ENCODE measurements at regions of chr11 and their contacts with region 1.

Region 1: GRCh38 chr11:28114731-28115130 is 6.5 kb downstream of the METTL15 start:
- DNase-seq: no peak
- ATAC-seq: no peak
- H3K4me3 ChIP-seq: no peak overlapping the region
- H3K4me3 Mint-ChIP-seq: no peak overlapping the region
- H3K27ac ChIP-seq: no peak overlapping the region
- H3K27ac Mint-ChIP-seq: no peak overlapping the region
- H3K4me1 ChIP-seq: peaks cover 10 to 13% of the 10 kb centered on the region in 2 donors
- H3K4me1 Mint-ChIP-seq: peaks cover 32% of the 10 kb centered on the region
- H3K27me3 ChIP-seq: no peaks in the 10 kb centered on the region
- H3K27me3 Mint-ChIP-seq: no peaks in the 10 kb centered on the region
- CTCF ChIP-seq: no peak

Region 2: GRCh38 chr11:28083118-28083517 is 31.6 kb before region 1 on chr11:
- CTCF ChIA-PET with region 1: no interaction called
- POLR2A ChIA-PET with region 1: no interaction called
- intact Hi-C with region 1: loop called (anchors 5 kb)
- DNase-seq: no peak
- ATAC-seq: no peak
- H3K4me3 ChIP-seq: no peak overlapping the region
- H3K4me3 Mint-ChIP-seq: no peak overlapping the region
- H3K27ac ChIP-seq: no peak overlapping the region
- H3K27ac Mint-ChIP-seq: no peak overlapping the region
- H3K4me1 ChIP-seq: no peaks in the 10 kb centered on the region
- H3K4me1 Mint-ChIP-seq: no peaks in the 10 kb centered on the region
- H3K27me3 ChIP-seq: no peaks in the 10 kb centered on the region
- H3K27me3 Mint-ChIP-seq: no peaks in the 10 kb centered on the region
- CTCF ChIP-seq: no peak